Astrocyte of the cerebellum (primary cell): ENCODE measurements at regions of chr12 and their contacts with region 1.

Region 1: DNA sequence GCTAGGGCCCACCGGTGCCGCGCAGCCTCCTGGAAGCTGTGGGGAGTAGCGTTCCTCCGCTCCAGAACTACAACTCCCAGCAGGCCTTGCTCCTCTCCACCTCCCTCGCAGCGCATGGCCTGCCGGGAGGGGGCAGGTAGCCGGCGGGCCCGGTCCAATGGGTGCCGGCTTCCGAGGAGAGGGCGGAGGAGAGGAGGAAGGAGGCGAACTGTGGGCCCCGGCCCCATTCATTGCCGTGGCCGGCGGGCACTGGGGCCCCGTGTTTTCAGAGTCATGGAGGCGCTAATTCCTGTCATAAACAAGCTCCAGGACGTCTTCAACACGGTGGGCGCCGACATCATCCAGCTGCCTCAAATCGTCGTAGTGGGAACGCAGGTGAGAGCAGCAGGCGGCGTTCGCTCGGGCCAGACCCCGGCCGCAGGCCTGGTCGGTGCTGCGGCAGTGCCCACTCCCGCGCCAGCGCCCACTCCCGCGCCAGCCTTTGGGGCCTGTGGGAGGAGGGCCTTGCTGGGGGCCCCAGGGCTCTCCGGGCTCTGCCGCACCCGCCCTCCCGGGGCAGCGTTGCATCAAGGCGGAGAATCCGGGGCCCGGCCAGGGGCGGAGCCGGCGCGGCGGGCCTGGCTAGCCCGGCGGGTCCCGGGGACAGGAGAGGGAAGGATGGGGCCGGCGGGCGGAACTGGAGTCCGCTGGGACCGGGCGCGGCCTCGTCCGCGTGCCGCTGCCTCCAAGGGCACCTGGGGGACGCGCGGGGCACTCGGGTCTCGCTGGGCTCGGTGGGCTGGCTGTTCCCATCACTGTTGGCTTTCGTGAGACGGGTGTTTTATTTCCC is at the start of gene DNM1L:
- DNase-seq: peak; percentile 89
- H3K4me3 ChIP-seq: peak within 1 kb of the TSS; percentile 76
- CTCF ChIP-seq: no peak

Region 2: DNA sequence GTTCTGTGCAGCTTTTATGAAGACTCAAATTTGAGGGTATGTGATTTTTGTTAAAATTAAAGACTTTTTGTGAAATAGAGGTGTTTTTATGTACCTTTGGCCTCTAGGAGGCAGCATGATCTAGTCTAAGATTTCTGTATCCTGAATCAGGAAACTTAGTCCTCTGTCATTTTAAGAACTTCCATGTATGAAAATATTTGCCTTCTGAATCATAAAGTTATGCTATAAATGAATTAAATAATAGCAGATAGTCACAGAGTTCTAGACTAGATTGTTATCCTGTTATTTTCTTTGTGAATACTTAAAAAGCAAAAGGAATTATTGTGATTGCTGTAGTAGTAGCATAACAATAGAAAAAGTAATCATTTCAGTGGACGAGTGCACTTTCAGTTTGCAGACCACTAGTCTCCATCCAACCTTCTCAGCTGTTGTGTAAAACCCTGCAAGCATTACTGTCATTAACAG is 223.7 kb before region 1 on chr12:
- in situ Hi-C with region 1: loop called (anchors 10 kb)
- DNase-seq: peak; percentile 64
- H3K4me3 ChIP-seq: peak overlapping the region; percentile 21
- CTCF ChIP-seq: peak; percentile 40

Region 3: DNA sequence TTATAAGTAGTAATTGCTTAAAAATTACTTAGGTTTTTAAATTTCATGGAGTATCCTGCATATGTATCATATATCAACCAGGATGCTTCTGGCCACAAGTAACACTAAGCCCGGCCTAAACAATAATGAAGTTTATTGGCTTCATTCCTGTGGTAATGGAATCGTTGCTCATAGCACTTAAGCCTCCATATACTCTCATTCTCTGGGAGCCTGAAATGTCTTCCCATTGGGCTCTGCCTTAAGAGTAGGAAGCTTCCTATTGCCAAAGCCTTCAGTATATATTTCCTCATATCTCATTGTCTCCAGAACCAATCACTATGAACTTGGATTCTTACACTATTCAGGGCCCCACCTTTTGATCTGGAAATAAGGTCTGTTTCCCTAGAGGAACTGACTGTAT is 84.1 kb before region 1 on chr12:
- in situ Hi-C with region 1: no loop called
- DNase-seq: peak; percentile 59
- H3K4me3 ChIP-seq: no peak overlapping the region
- CTCF ChIP-seq: no peak

Region 4: GRCh38 chr12:32627976-32628375 is 51.3 kb before region 1 on chr12:
- in situ Hi-C with region 1: no loop called
- DNase-seq: no peak
- H3K4me3 ChIP-seq: no peak overlapping the region
- CTCF ChIP-seq: no peak

Region 5: GRCh38 chr12:33116284-33116683 is 437.0 kb after region 1 on chr12:
- in situ Hi-C with region 1: no loop called
- DNase-seq: no peak
- H3K4me3 ChIP-seq: no peak overlapping the region
- CTCF ChIP-seq: no peak